Posterior vena cava (tissue), 2 donors: ENCODE measurements at regions of chr16 and their contacts with region 1.

Region 1: DNA sequence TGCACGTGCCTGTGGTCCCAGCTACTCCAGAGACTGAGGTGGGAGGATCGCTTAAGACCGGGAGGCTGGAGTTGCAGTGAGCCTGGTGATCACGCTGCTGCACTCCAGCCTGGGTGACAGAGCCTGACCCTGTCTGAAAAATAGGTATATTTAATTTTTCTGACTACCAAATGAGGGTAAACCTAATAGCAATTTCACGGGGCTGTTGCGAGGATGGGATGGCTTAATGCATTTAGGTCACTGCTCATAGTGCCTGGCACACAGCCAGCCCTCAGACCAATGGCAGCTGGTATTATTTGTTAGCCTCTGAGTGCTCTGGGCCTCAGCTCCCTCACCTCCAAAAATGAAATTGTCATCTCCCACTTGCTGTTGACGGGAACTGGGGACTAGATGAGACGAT is 5.9 kb upstream of the CDIP1 start:
- DNase-seq: no peak

Region 2: DNA sequence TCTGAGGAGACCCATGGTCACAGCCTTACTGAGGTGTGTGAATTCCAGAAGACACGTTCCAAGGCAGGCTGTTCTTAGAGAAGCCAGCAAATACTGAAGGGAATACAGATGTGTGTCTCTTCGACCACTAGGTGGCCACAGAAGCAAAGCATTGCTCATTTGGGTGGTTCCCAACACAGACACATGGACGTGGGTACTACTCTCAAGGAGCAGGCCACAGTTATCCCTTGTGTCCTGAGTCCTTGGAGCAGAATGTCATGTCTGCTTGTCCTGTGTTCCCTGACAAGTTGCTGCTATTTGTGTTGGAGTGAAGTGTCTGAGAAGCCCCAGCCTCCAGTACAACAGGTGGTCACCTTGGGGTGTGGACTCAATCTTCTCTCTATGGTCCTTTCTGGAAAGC is 38.0 kb before region 1 on chr16:
- intact Hi-C with region 1: loop called in 1 of 2 experiments (anchors 5 kb)
- DNase-seq: no peak

Region 3: GRCh38 chr16:4531811-4532210 is 12.7 kb before region 1 on chr16:
- intact Hi-C with region 1: loop called in 1 of 2 experiments (anchors 1 kb)
- DNase-seq: no peak